Cardiac septum (tissue), 1 donor: ENCODE measurements at regions of chr7 and their contacts with region 1.

Region 1: GRCh38 chr7:112550468-112551060 is 69.8 kb downstream of the LSMEM1 start:
- DNase-seq: no peak

Region 2: GRCh38 chr7:112386619-112387018 is 163.9 kb before region 1 on chr7:
- intact Hi-C with region 1: no loop called
- DNase-seq: no peak

Region 3: GRCh38 chr7:112898432-112899290 is 348.1 kb after region 1 on chr7:
- intact Hi-C with region 1: loop called (anchors 5 kb)
- DNase-seq: no peak

Region 4: GRCh38 chr7:113421696-113422330 is 871.2 kb after region 1 on chr7:
- intact Hi-C with region 1: loop called (anchors 5 kb)
- DNase-seq: peak; percentile 79